Sigmoid colon (tissue), 7 donors: ENCODE measurements at regions of chr13 and their contacts with region 1.

Region 1: DNA sequence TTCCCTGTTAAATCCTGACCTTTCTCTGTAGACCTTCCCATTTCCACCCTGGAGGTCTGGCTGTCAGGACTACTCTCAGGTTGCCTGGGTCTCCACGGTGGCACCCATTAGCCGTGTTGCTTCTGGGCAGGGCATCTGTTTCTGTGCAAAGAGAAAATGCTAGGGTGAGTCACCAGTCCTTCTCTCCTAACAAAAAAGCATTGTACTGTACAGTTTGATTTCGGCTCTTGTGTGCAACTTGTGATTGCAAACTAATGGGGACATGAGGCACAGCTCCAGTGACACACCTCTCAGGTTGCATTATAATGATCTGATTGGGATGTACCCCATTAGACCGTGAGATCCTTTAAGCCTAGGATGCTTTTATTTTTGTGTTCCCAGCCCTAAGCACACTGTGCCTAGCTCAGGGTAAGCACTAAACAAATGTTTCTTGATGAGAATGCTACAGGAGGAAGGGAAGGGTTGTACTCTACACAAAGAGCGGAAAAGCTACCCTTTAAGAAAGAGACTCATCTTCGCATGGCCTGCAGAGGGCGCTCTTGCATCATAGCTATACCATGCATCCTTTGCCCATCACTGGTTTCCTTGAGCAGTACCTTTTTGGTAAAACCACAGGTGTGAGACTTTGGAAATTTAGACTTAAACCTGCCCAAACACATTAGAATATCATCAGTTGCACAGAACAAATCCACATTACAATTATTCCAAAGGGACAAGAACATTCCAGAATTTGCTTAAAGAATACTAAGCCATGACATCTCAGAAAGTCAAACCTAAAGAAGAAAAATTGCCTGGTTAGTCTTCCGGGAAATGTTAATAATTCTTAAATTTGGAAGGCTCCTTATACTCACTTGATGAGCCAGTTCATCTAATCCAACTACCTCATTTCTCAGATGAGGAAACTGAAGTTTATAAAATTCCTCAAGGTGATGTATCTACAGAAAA is 20.3 kb upstream of the TRIM13 start:
- DNase-seq: peak; percentile 79
- H3K4me3 ChIP-seq: no peak overlapping the region
- H3K27ac ChIP-seq: no peak overlapping the region
- H3K4me1 ChIP-seq: no peaks in the 10 kb centered on the region
- H3K27me3 ChIP-seq: no peaks in the 10 kb centered on the region
- CTCF ChIP-seq: peak; percentile 57 to 87 (median 78)
- EP300 ChIP-seq: no peak
- POLR2A ChIP-seq: no peak

Region 2: DNA sequence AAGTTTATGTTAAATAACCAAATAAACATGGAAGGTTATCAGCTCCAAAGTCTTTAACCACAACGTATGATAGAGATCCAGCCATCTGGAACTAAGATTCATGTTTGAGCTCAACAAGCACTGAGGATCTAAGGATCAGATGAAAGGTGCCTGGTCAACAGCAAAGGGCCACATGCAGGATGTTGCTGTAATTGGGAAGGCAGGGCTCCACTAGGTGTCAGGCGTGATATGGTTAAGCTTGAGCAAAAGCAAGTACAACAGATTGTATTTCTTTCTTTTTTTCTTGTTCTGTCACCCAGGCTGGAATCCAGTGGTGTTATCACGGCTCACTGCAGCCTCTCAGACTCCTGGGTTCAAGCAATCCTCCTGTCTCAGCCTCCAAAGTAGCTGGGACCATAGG is 297.3 kb before region 1 on chr13:
- intact Hi-C with region 1: no loop called
- DNase-seq: no peak
- H3K4me3 ChIP-seq: no peak overlapping the region
- H3K27ac ChIP-seq: no peak overlapping the region
- H3K4me1 ChIP-seq: no peaks in the 10 kb centered on the region
- H3K27me3 ChIP-seq: no peaks in the 10 kb centered on the region
- CTCF ChIP-seq: no peak
- EP300 ChIP-seq: no peak
- POLR2A ChIP-seq: no peak

Region 3: DNA sequence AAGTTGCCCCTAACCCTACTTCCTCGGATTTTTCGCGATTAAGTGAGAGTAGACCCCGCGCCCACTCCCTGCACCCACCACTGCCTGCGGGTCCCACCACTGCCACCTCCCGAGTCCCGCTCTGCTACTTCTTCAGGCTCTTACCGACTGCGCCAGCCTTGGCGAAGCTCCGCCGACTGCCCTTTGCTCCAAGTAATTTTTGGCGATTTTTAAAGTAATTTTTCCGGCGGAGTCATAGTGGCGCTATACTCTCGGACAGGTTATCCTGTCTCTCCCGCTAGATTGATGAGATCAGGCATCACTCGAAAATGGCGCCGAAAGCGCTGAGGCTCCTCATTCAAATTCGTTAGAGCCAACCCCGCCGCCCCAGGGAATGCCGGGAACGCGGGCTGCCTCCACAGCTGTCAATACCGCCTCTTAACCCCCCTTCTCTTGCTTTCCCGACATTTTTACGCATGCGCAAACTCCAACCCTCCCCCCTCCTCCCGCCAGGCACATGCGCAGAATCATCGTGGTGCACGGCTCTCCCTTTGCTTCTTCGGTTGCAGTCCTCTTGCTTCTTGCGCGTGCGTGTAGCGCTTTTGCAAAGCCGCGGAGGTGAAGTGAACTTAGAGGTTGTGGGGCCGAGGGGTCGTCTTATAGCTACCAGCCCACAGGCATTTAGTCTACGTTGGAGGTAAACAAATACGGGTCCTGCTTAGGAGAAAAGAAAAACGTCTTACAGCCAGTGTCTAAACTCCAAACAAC is 105.3 kb after region 1 on chr13:
- intact Hi-C with region 1: loop called (anchors 5 kb)
- DNase-seq: peak; percentile 99
- H3K4me3 ChIP-seq: peak overlapping the region; percentile 75 to 88 (median 79)
- H3K27ac ChIP-seq: peak overlapping the region; percentile 89 to 96 (median 91)
- H3K4me1 ChIP-seq: peaks cover 0 to 59% (median 27%) of the 10 kb centered on the region in 4 donors
- H3K27me3 ChIP-seq: peaks cover 0 to 9% (median 0%) of the 10 kb centered on the region in 3 donors
- CTCF ChIP-seq: no peak
- EP300 ChIP-seq: peak in 2 of 4 donors; percentile 4 to 7
- POLR2A ChIP-seq: peak; percentile 7 to 8

Region 4: GRCh38 chr13:50801087-50801931 is 824.7 kb after region 1 on chr13:
- intact Hi-C with region 1: loop called (anchors 5 kb)
- DNase-seq: no peak
- H3K4me3 ChIP-seq: no peak overlapping the region
- H3K27ac ChIP-seq: peak overlapping the region in 1 of 4 donors; percentile 11
- H3K4me1 ChIP-seq: peaks cover 0 to 14% (median 6%) of the 10 kb centered on the region in 4 donors
- H3K27me3 ChIP-seq: no peaks in the 10 kb centered on the region
- CTCF ChIP-seq: peak; percentile 48 to 54 (median 49)
- EP300 ChIP-seq: no peak
- POLR2A ChIP-seq: no peak

Region 5: DNA sequence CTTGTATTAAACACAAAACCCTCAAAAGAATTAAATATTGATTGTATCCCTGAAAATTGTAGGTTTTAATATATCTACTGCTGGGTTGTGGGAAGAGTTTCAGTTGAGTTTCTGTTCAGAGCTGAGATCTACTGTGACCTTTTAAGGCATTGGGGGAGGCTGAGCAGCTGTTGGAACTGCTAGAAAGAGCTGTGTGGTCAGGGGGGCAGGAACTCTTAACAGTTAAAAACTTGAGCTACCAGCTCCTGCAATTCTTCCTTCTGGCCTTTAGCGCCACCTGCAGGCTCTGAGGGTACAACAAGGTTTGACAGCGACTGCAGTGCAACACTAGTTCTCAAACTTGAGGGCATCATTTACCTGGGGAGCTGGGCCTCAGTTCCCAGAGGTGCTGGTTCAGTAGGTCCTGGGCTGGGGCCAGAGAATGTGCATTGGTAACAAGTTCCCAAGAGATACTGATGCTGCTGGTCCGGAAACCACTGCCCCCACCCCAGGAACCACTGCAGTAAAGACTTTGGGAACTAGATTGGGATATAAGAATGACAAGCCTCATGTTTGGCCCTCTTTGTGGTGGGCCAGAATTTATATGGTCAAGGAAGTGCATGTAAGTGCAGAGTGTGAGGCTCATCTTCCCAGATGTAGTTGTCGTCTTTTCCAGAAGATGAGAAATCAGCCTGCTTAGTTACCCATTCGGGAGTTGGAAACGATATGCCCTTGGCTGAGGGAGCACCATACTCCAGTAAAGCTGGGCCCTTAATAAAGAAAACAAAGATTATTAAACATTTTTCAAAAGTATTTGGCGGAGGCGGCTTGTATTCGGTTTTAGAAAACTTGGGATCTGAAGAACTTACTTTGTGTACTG is 935.6 kb after region 1 on chr13:
- intact Hi-C with region 1: loop called (anchors 5 kb)
- DNase-seq: peak; percentile 91
- H3K4me3 ChIP-seq: no peak overlapping the region
- H3K27ac ChIP-seq: peak overlapping the region; percentile 55 to 91 (median 87)
- H3K4me1 ChIP-seq: peaks cover 0 to 42% (median 34%) of the 10 kb centered on the region in 4 donors
- H3K27me3 ChIP-seq: no peaks in the 10 kb centered on the region
- CTCF ChIP-seq: peak; percentile 54 to 81 (median 70)
- EP300 ChIP-seq: no peak
- POLR2A ChIP-seq: no peak

Region 6: GRCh38 chr13:51070005-51070649 is 1093.5 kb after region 1 on chr13:
- intact Hi-C with region 1: loop called (anchors 2 kb)
- DNase-seq: peak; percentile 87
- H3K4me3 ChIP-seq: no peak overlapping the region
- H3K27ac ChIP-seq: no peak overlapping the region
- H3K4me1 ChIP-seq: no peaks in the 10 kb centered on the region
- H3K27me3 ChIP-seq: peaks cover 0 to 8% (median 0%) of the 10 kb centered on the region in 3 donors
- CTCF ChIP-seq: peak; percentile 60 to 88 (median 84)
- EP300 ChIP-seq: no peak
- POLR2A ChIP-seq: no peak